Activated T-helper 1 cell treated with anti-CD3 and anti-CD28 coated beads, Interleukin-12 subunit alpha, Interleukin-12 subunit beta, Interleukin-2, Interleukin-4 antibody, amounts not matched to agents 30 ng/mL and 10 ng/mL and 1 ng/mL, durations not matched to agents 14 hours and 24 hours and 36 hours (primary cell): ENCODE measurements at regions of chr14 and their contacts with region 1.

Region 1: DNA sequence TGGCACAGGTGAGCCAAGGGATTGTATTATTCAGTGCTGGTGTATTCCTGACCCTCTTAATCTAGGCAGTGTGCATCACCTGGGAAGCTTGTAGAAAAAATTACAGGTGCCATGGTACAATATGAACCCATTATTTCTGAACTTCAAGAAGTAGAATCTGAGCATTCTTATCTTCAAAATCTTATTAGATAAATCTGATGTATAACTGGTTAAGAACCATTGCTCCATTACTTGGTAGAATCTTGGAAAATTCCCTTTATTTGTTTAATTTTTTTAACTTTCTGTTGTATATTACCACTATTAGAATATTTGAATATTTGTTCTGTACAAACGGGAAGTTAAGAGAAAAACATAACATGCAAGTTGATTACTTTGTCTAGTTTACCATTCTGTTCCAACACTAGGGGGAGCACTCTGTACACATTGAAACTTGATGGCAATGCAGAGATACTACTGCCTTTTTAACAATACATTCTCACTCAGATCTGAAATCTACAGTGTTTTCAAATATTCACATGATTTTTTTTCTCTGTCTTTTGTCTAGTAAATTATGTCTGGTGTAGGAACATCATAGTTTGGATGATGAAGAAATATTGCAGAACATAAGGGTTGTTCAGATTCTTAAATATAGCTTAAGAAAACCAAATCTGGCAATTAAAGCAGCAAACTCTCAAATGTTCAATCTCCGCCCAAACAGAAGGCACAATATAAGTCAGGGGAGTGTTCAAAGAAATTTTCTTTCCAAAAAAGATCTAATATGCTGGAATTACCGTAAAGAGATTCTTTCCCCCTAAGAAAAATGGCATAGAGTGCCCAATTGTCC is 196.6 kb downstream of the PCNX1 start:
- DNase-seq: peak; percentile 12
- H3K4me3 Mint-ChIP-seq: no peak overlapping the region
- H3K27ac Mint-ChIP-seq: no peak overlapping the region
- H3K4me1 Mint-ChIP-seq: peaks cover 3% of the 10 kb centered on the region
- H3K27me3 Mint-ChIP-seq: no peaks in the 10 kb centered on the region

Region 2: GRCh38 chr14:71753126-71753830 is 649.4 kb after region 1 on chr14:
- intact Hi-C with region 1: loop called (anchors 1 kb)
- DNase-seq: peak; percentile 34
- H3K4me3 Mint-ChIP-seq: peak overlapping the region; percentile 19
- H3K27ac Mint-ChIP-seq: no peak overlapping the region
- H3K4me1 Mint-ChIP-seq: peaks cover 18% of the 10 kb centered on the region
- H3K27me3 Mint-ChIP-seq: peaks cover 12% of the 10 kb centered on the region

Region 3: GRCh38 chr14:71855399-71856036 is 751.6 kb after region 1 on chr14:
- intact Hi-C with region 1: loop called (anchors 1 kb)
- DNase-seq: peak; percentile 24
- H3K4me3 Mint-ChIP-seq: no peak overlapping the region
- H3K27ac Mint-ChIP-seq: no peak overlapping the region
- H3K4me1 Mint-ChIP-seq: peaks cover 14% of the 10 kb centered on the region
- H3K27me3 Mint-ChIP-seq: peaks cover 27% of the 10 kb centered on the region